ENCODE measurements at regions of chr18 and their contacts with region 1.

Region 1: GRCh38 chr18:35972197-35973052 is at the start of gene RMP24:
- DNase-seq: peak; percentile 91 to 94 (median 93)
- H3K4me3 ChIP-seq: peak within 1 kb of the TSS; percentile 84 to 92
- H3K4me3 Mint-ChIP-seq: peak within 1 kb of the TSS; percentile 91 to 98 (median 96)
- H3K27ac ChIP-seq: peak within 1 kb of the TSS; percentile 72
- H3K27ac Mint-ChIP-seq: peak within 1 kb of the TSS; percentile 92 to 99 (median 98)
- H3K4me1 ChIP-seq: peaks cover 51% of the 10 kb centered on the region
- H3K4me1 Mint-ChIP-seq: peaks cover 38 to 66% (median 52%) of the 10 kb centered on the region in 4 donors
- H3K27me3 ChIP-seq: no peaks in the 10 kb centered on the region
- H3K27me3 Mint-ChIP-seq: no peaks in the 10 kb centered on the region

Region 2: GRCh38 chr18:34976899-34977837 is 995.3 kb before region 1 on chr18:
- CTCF ChIA-PET with region 1: no interaction called
- POLR2A ChIA-PET with region 1: no interaction called
- intact Hi-C with region 1: loop called (anchors 5 kb)
- DNase-seq: peak; percentile 58 to 81 (median 66)
- H3K4me3 ChIP-seq: peak overlapping the region; percentile 60 to 82
- H3K4me3 Mint-ChIP-seq: peak overlapping the region; percentile 90 to 97 (median 94)
- H3K27ac ChIP-seq: no peak overlapping the region
- H3K27ac Mint-ChIP-seq: peak overlapping the region in 4 of 7 donors; percentile 83 to 90 (median 88)
- H3K4me1 ChIP-seq: peaks cover 14% of the 10 kb centered on the region
- H3K4me1 Mint-ChIP-seq: peaks cover 15 to 30% (median 19%) of the 10 kb centered on the region in 4 donors
- H3K27me3 ChIP-seq: peaks cover 9% of the 10 kb centered on the region
- H3K27me3 Mint-ChIP-seq: peaks cover 10 to 12% of the 10 kb centered on the region in 2 donors

Region 3: DNA sequence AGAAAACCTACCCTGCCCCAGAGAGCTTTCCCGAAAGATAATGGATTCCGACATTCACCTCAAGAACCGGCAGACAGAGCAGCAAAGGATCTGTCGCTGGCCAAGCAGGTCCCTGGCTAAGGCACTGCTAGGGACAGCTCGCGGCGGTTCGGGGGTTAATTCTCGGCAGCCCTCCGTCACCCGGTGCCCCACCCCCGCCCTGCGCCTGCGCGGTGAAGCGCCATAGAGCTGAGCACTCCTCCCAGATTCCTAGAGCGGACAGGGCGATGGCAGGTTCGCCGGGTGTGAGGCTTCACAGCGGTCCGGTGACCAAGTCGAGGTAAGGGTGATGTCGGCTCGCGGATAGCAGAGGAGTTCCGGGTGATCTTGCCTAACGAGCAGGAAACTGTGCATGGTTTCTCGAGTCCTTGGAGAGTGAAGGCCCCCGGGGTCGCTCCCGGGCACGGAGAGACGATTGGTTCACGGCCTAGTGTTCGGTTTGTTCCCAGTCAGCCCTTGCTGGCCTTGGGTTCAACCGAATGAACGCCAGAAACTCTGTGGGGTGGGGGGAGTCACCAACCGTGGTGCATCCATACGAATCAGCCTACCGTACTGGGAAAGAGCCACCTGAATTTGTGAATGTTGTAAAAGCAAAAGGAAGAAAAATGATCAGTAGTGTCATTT is 682.2 kb before region 1 on chr18 and contains the start of gene ZSCAN30:
- CTCF ChIA-PET with region 1: no interaction called
- POLR2A ChIA-PET with region 1: interaction called, 5 read pairs
- intact Hi-C with region 1: loop called (anchors 5 kb)
- DNase-seq: peak; percentile 94 to 96 (median 95)
- H3K4me3 ChIP-seq: peak within 1 kb of the TSS; percentile 84 to 89
- H3K4me3 Mint-ChIP-seq: peak within 1 kb of the TSS; percentile 96 to 100 (median 98)
- H3K27ac ChIP-seq: peak within 1 kb of the TSS; percentile 84
- H3K27ac Mint-ChIP-seq: peak within 1 kb of the TSS; percentile 98 to 100 (median 99)
- H3K4me1 ChIP-seq: peaks cover 36% of the 10 kb centered on the region
- H3K4me1 Mint-ChIP-seq: peaks cover 36 to 60% (median 46%) of the 10 kb centered on the region in 4 donors
- H3K27me3 ChIP-seq: no peaks in the 10 kb centered on the region
- H3K27me3 Mint-ChIP-seq: no peaks in the 10 kb centered on the region
- total RNA-seq, gene ZSCAN30: 16.9 to 18.4 TPM

Region 4: DNA sequence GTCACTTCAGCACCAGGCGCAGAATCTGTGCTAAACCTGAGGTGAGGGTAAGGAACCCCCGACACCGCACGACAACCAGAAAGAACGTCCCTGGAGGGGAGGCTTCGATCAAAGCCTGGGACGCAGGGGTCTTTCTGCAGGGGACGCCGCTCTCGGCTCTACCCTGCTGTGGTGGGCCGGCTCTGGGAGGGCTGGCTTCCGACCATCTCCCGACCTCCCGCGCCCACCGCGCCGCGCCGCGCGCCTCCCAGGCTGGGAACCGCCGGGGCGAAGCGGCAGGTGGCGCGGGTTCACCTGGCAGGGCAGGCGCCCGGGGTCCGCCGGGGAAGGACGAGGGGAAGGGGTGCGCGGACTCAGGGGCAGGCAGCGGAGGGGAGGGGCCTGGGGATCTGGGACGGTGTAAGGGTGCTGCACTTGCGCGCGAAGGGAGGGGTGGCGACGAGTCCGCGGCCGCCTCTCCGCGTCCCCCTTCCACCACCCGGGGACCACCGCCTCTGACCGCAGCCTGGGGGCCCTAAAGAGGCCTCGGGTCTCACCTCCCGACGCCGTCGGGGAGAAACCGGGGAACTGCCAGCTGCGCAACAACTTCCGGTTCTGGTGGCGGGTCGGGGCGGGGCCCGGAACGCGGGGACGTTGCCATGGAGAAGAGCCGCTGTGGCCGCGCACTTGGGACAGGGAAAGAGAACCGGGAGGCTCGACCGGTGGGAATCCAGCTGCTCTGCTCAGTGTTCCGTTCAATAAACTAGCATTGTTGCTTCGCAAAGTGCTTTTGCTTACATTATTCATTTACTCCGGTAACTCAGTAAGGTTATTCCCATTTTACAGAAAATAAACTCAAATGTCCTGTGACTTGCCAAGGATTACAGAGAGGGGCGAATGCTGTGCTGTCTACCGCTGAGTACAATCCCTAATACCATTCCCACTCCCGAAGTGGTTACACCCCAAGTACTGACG is 595.4 kb before region 1 on chr18 and contains the start of gene ZNF396:
- CTCF ChIA-PET with region 1: no interaction called
- POLR2A ChIA-PET with region 1: no interaction called
- intact Hi-C with region 1: loop called (anchors 2 kb)
- DNase-seq: peak; percentile 57 to 75 (median 65)
- H3K4me3 ChIP-seq: peak within 1 kb of the TSS; percentile 45 to 70
- H3K4me3 Mint-ChIP-seq: peak within 1 kb of the TSS; percentile 82 to 92 (median 88)
- H3K27ac ChIP-seq: peak within 1 kb of the TSS; percentile 34
- H3K27ac Mint-ChIP-seq: peak within 1 kb of the TSS; percentile 37 to 91 (median 86)
- H3K4me1 ChIP-seq: peaks cover 7% of the 10 kb centered on the region
- H3K4me1 Mint-ChIP-seq: peaks cover 0 to 12% (median 2%) of the 10 kb centered on the region in 4 donors
- H3K27me3 ChIP-seq: no peaks in the 10 kb centered on the region
- H3K27me3 Mint-ChIP-seq: peaks cover 0 to 1% of the 10 kb centered on the region in 2 donors
- total RNA-seq, gene ZNF396: 5.5 to 7.3 TPM

Region 5: GRCh38 chr18:35835833-35836232 is 136.6 kb before region 1 on chr18:
- CTCF ChIA-PET with region 1: no interaction called
- POLR2A ChIA-PET with region 1: no interaction called
- intact Hi-C with region 1: no loop called
- DNase-seq: no peak
- H3K4me3 ChIP-seq: no peak overlapping the region
- H3K4me3 Mint-ChIP-seq: no peak overlapping the region
- H3K27ac ChIP-seq: no peak overlapping the region
- H3K27ac Mint-ChIP-seq: no peak overlapping the region
- H3K4me1 ChIP-seq: no peaks in the 10 kb centered on the region
- H3K4me1 Mint-ChIP-seq: no peaks in the 10 kb centered on the region
- H3K27me3 ChIP-seq: no peaks in the 10 kb centered on the region
- H3K27me3 Mint-ChIP-seq: peaks cover 1 to 11% of the 10 kb centered on the region in 2 donors

Region 6: DNA sequence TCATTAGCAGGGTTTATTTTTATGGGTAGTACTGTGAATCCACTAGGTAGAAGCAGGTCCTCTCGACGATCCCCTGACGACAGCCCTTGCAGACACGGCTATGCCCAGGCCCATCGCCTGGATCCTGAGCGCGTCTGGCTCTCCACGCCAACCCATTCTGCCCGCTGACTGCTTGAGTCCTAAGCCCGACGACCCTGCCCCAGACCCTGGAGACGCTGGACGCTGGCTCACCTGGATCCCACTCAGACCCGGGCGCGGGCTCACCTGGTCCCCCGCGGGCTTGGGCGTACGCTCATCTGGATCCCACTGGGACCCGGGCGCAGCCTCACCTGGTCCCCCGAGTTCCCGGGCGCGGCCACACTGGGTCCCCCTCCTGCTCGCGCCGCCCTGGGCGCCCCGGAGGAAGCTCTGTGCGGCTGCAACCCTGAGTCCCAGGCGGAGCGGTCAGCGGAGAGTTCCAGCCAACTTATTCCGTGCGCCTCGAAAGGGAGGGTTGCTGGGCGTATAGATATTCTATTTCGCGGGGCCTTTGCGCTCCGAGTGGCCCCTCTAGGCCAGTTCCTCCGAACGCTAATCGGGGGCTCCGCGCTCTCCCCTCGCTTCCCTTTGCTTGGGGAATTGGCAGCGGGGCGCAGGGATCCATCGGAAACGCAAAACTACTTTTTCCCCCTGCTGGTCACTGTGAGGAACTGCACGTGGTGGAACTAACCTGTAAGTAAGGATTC is 22.4 kb before region 1 on chr18:
- CTCF ChIA-PET with region 1: interaction called, 8 read pairs
- POLR2A ChIA-PET with region 1: interaction called, 3 read pairs
- intact Hi-C with region 1: loop called (anchors 1 kb)
- DNase-seq: peak; percentile 53 to 63 (median 60)
- H3K4me3 ChIP-seq: peak overlapping the region; percentile 3 to 36
- H3K4me3 Mint-ChIP-seq: peak overlapping the region; percentile 83 to 91 (median 88)
- H3K27ac ChIP-seq: no peak overlapping the region
- H3K27ac Mint-ChIP-seq: peak overlapping the region in 1 of 7 donors; percentile 72
- H3K4me1 ChIP-seq: peaks cover 7% of the 10 kb centered on the region
- H3K4me1 Mint-ChIP-seq: peaks cover 0 to 4% (median 3%) of the 10 kb centered on the region in 4 donors
- H3K27me3 ChIP-seq: no peaks in the 10 kb centered on the region
- H3K27me3 Mint-ChIP-seq: peaks cover 8 to 16% of the 10 kb centered on the region in 2 donors

Region 7: DNA sequence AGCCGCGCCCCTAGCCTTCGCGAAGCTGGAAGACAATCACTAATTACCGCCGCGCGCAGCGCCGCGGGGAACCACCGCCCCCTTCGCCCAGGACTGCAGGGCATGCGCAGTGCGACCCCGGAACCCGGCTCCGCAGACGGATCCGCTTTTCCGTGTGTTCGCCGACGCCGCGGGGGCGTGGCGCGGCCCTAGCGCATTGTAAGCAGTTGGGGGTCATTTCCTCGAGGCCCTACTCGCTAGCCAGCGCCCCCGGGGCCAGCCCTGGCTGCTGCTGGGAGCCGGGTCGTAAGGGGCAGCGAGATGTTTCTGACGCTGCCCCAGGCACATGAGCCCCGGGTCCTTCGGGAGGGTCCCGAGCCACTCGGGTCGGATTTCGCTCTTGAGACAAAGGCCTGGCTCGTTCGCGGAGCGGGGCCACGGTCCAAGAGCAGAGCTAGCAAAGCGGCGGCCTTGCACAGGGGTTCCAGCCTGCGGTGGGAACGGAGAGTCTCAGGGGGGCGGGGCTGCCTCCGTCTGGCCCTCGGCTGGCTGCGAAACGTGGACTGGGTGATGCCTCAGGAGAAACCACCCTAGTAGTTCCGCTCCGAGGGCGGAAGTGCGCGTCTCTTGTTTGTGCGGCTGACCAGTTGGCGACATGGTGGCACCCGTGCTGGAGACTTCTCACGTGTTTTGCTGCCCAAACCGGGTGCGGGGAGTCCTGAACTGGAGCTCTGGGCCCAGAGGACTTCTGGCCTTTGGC is 157.0 kb after region 1 on chr18 and contains the starts of genes ELP2 and SLC39A6:
- CTCF ChIA-PET with region 1: no interaction called
- POLR2A ChIA-PET with region 1: interaction called, 31 read pairs
- intact Hi-C with region 1: loop called (anchors 1 kb)
- DNase-seq: peak; percentile 95
- H3K4me3 ChIP-seq: peak within 1 kb of the TSS; percentile 85 to 90
- H3K4me3 Mint-ChIP-seq: peak within 1 kb of the TSS; percentile 92 to 98 (median 98)
- H3K27ac ChIP-seq: peak within 1 kb of the TSS; percentile 100
- H3K27ac Mint-ChIP-seq: peak within 1 kb of the TSS; percentile 97 to 99 (median 98)
- H3K4me1 ChIP-seq: peaks cover 43% of the 10 kb centered on the region
- H3K4me1 Mint-ChIP-seq: peaks cover 39 to 80% (median 60%) of the 10 kb centered on the region in 4 donors
- H3K27me3 ChIP-seq: no peaks in the 10 kb centered on the region
- H3K27me3 Mint-ChIP-seq: no peaks in the 10 kb centered on the region
- total RNA-seq, gene ELP2: 139 to 143 TPM
- total RNA-seq, gene SLC39A6: 18.9 to 19.7 TPM

Measured in CD4-positive, alpha-beta memory T cell (primary cell).